ENCODE measurements at regions of chr17 and their contacts with region 1.

Region 1: DNA sequence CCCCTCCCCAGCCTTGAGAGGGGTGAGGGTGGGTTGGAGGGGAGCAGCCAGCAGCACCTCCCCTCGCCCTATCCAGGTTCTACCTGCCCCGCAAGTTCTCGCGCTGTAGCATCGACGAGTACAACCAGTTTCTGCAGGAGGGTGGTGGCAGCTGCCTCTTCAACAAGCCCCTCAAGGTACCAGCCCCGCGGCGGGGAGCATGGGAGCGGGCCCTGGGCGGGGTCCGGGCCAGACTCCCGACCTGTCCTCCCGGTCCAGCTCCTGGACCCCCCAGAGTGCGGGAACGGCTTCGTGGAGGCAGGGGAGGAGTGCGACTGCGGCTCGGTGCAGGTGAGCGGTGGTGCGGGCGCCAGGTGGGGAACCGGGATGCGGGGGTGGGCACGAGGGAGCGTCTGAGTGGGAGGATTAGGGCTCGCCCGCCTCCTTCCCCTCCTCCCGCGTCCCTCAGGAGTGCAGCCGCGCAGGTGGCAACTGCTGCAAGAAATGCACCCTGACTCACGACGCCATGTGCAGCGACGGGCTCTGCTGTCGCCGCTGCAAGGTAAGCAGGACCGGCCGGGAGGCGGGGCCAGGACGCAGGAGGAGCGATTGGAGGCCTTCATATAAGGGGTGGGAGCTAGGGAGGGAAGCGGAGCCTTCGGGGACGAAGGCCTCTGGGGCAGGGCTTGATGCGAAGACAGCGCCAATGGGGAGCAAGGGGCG is 16.5 kb downstream of the ADAM11 start:
- DNase-seq: peak; percentile 90
- ATAC-seq: peak; percentile 96
- H3K4me3 Mint-ChIP-seq: peak overlapping the region; percentile 87
- H3K27ac Mint-ChIP-seq: no peak overlapping the region
- H3K4me1 Mint-ChIP-seq: peaks cover 18% of the 10 kb centered on the region
- H3K27me3 Mint-ChIP-seq: no peaks in the 10 kb centered on the region
- CTCF ChIP-seq: no peak

Region 2: GRCh38 chr17:44533533-44534246 is 241.6 kb before region 1 on chr17:
- CTCF ChIA-PET with region 1: interaction called, 7 read pairs
- POLR2A ChIA-PET with region 1: no interaction called
- intact Hi-C with region 1: loop called (anchors 2 kb)
- DNase-seq: peak; percentile 82
- ATAC-seq: peak; percentile 94
- H3K4me3 Mint-ChIP-seq: peak overlapping the region; percentile 29
- H3K27ac Mint-ChIP-seq: peak overlapping the region; percentile 5
- H3K4me1 Mint-ChIP-seq: peaks cover 7% of the 10 kb centered on the region
- H3K27me3 Mint-ChIP-seq: peaks cover 6% of the 10 kb centered on the region
- CTCF ChIP-seq: peak; percentile 86

Region 3: GRCh38 chr17:44628243-44629188 is 146.8 kb before region 1 on chr17:
- CTCF ChIA-PET with region 1: no interaction called
- POLR2A ChIA-PET with region 1: no interaction called
- intact Hi-C with region 1: no loop called
- DNase-seq: peak; percentile 53
- ATAC-seq: peak; percentile 96
- H3K4me3 Mint-ChIP-seq: peak overlapping the region; percentile 85
- H3K27ac Mint-ChIP-seq: peak overlapping the region; percentile 95
- H3K4me1 Mint-ChIP-seq: peaks cover 21% of the 10 kb centered on the region
- H3K27me3 Mint-ChIP-seq: peaks cover 3% of the 10 kb centered on the region
- CTCF ChIP-seq: no peak

Region 4: GRCh38 chr17:44864866-44865660 is 89.8 kb after region 1 on chr17:
- CTCF ChIA-PET with region 1: interaction called, 67 read pairs
- POLR2A ChIA-PET with region 1: interaction called, 3 read pairs
- intact Hi-C with region 1: loop called (anchors 1 kb)
- DNase-seq: peak; percentile 26
- ATAC-seq: peak; percentile 52
- H3K4me3 Mint-ChIP-seq: no peak overlapping the region
- H3K27ac Mint-ChIP-seq: no peak overlapping the region
- H3K4me1 Mint-ChIP-seq: no peaks in the 10 kb centered on the region
- H3K27me3 Mint-ChIP-seq: no peaks in the 10 kb centered on the region
- CTCF ChIP-seq: peak; percentile 41

Region 5: GRCh38 chr17:45021607-45022287 is 246.5 kb after region 1 on chr17:
- CTCF ChIA-PET with region 1: interaction called, 7 read pairs
- POLR2A ChIA-PET with region 1: interaction called, 3 read pairs
- intact Hi-C with region 1: loop called (anchors 1 kb)
- DNase-seq: peak; percentile 65
- ATAC-seq: peak; percentile 86
- H3K4me3 Mint-ChIP-seq: peak overlapping the region; percentile 39
- H3K27ac Mint-ChIP-seq: no peak overlapping the region
- H3K4me1 Mint-ChIP-seq: peaks cover 32% of the 10 kb centered on the region
- H3K27me3 Mint-ChIP-seq: peaks cover 37% of the 10 kb centered on the region
- CTCF ChIP-seq: no peak

Region 6: DNA sequence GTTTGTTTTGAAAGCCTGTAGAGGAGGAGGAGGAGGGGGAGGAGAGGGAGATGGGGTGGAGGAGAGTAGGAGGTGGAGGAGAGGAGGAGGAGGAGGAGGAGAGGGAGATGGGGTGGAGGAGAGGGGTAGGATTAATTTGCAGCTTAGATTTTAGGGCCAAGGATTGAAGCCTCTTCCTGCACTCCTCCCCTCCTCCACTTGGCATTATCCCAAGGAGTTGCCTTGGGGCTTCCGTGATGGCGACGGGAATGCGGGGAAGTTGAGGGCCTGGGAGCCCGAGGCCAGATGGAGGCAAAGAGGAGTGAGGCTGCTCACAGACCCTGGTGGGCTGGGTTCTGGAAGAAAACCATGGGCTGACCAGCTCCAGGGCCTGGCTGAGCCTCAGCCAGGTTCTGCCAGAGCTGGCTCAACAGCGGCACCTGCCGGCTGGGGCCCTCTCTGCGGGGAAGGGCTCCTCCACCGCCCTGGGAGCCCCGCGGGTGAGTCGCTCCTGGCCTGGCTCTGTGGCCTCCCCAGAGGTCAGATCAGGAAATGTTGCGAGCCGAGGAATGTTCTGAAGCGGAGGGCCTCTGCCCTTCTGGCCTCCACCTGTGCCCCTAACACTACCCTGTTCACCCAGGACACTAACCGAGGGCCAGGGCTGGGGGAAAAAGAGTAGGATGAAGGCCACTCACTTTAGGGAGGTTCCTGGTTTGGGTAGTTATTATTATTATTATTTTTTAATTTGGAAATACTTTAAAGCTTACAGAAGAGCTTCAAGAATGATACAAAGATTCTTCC is 422.5 kb after region 1 on chr17:
- CTCF ChIA-PET with region 1: no interaction called
- POLR2A ChIA-PET with region 1: no interaction called
- intact Hi-C with region 1: loop called (anchors 5 kb)
- DNase-seq: peak; percentile 91
- ATAC-seq: peak; percentile 100
- H3K4me3 Mint-ChIP-seq: no peak overlapping the region
- H3K27ac Mint-ChIP-seq: no peak overlapping the region
- H3K4me1 Mint-ChIP-seq: peaks cover 4% of the 10 kb centered on the region
- H3K27me3 Mint-ChIP-seq: no peaks in the 10 kb centered on the region
- CTCF ChIP-seq: no peak